ENCODE measurements at regions of chr6 and their contacts with region 1.

Region 1: GRCh38 chr6:118283766-118284165 is 264.3 kb upstream of the PLN start:
- DNase-seq: peak in 1 of 2 donors; percentile 80
- H3K4me3 ChIP-seq: peak overlapping the region in 1 of 2 donors; percentile 35
- H3K27ac ChIP-seq: no peak overlapping the region
- H3K4me1 ChIP-seq: peaks cover 11 to 36% of the 10 kb centered on the region in 2 donors
- H3K27me3 ChIP-seq: no peaks in the 10 kb centered on the region
- CTCF ChIP-seq: peak; percentile 42 to 81 (median 71)

Region 2: DNA sequence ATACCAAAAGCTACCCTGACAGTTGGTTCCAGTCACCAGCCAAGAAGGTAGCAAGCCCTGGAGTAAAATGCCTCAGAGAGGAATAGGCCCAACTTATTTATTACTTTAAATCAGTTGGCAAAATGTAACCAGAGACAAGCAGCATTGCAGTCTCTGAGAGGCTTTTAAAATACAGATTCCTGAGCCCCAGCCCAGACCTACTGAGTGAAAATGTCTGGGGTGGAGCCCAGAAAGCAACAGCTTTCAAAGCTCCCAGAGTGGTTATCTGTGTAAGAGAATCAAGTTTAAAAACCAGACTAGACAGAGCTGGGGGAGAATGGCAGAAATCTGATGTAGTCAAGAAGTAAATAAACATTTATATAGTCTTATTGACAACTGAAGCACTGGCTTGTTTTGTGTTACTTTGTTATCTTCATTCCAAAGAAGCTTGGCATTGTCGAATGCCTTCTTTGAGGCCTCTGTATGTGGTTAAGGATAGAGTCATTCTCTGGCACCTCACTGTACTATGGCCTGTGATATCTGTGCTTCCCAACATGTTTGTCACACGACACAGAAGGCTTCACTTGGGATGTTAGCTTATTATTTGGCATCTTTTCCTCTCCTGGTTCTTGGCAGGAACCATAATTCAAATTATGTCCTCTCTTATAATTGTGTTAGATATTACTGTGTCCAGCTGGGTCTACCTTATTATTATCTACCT is 63.2 kb before region 1 on chr6:
- intact Hi-C with region 1: no loop called
- DNase-seq: no peak
- H3K4me3 ChIP-seq: no peak overlapping the region
- H3K27ac ChIP-seq: no peak overlapping the region
- H3K4me1 ChIP-seq: no peaks in the 10 kb centered on the region
- H3K27me3 ChIP-seq: no peaks in the 10 kb centered on the region
- CTCF ChIP-seq: no peak

Region 3: GRCh38 chr6:118509009-118509617 is 225.3 kb after region 1 on chr6:
- intact Hi-C with region 1: loop called (anchors 1 kb)
- DNase-seq: peak in 1 of 2 donors; percentile 74
- H3K4me3 ChIP-seq: no peak overlapping the region
- H3K27ac ChIP-seq: no peak overlapping the region
- H3K4me1 ChIP-seq: peaks cover 0 to 12% of the 10 kb centered on the region in 2 donors
- H3K27me3 ChIP-seq: no peaks in the 10 kb centered on the region
- CTCF ChIP-seq: peak; percentile 57 to 78 (median 66)

Region 4: GRCh38 chr6:118551063-118552053 is 267.6 kb after region 1 on chr6:
- intact Hi-C with region 1: loop called (anchors 2 kb)
- DNase-seq: no peak
- H3K4me3 ChIP-seq: peak overlapping the region; percentile 53 to 69
- H3K27ac ChIP-seq: peak overlapping the region; percentile 83 to 89
- H3K4me1 ChIP-seq: no peaks in the 10 kb centered on the region
- H3K27me3 ChIP-seq: no peaks in the 10 kb centered on the region
- CTCF ChIP-seq: peak; percentile 57 to 69 (median 64)

Region 5: DNA sequence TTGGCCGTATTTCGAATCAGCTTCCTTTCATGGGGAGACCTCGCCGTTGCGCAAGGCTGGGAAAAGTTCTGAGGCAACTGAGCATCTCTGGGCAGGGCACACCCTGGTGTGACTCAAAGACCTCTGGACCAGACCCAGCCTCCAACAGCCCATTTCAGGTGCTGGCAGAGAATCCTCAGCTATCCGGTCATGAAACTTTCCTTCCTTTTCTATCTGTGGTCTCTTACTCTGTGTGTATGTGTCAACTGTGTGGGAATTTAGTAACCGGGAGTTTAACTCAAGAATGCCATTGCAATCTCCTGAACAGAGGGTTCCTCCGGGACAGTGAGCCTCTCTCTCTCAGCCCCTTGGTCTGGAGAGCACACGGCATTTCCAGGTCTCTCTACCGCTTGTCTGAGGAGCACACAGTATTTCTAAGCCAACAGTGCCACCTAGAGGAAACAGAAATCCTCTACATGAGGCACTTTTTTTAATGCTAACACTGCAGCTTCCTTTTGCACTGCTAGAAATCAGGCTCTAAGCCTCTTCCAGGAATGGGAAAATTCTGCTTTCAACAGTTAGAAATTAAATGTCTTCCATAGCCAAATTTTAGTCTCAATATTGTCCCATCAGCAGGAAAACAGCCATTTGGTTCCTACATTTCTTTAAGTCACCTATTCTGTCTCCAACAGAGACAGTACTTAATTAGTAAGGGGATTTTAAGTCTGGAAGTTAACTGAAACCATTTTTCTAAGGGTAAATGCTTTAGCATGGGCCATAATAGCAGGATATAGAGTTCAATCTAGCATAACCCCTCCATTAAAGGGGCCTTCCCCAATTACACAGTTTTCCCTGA is 297.0 kb after region 1 on chr6:
- intact Hi-C with region 1: loop called (anchors 1 kb)
- DNase-seq: peak in 1 of 2 donors; percentile 77
- H3K4me3 ChIP-seq: peak overlapping the region in 1 of 2 donors; percentile 8
- H3K27ac ChIP-seq: no peak overlapping the region
- H3K4me1 ChIP-seq: no peaks in the 10 kb centered on the region
- H3K27me3 ChIP-seq: no peaks in the 10 kb centered on the region
- CTCF ChIP-seq: peak; percentile 60 to 81 (median 61)

Region 6: GRCh38 chr6:118618679-118619377 is 335.1 kb after region 1 on chr6:
- intact Hi-C with region 1: loop called (anchors 1 kb)
- DNase-seq: peak in 1 of 2 donors; percentile 69
- H3K4me3 ChIP-seq: no peak overlapping the region
- H3K27ac ChIP-seq: no peak overlapping the region
- H3K4me1 ChIP-seq: peaks cover 3% of the 10 kb centered on the region in 2 donors
- H3K27me3 ChIP-seq: no peaks in the 10 kb centered on the region
- CTCF ChIP-seq: peak; percentile 75 to 83 (median 83)

Region 7: DNA sequence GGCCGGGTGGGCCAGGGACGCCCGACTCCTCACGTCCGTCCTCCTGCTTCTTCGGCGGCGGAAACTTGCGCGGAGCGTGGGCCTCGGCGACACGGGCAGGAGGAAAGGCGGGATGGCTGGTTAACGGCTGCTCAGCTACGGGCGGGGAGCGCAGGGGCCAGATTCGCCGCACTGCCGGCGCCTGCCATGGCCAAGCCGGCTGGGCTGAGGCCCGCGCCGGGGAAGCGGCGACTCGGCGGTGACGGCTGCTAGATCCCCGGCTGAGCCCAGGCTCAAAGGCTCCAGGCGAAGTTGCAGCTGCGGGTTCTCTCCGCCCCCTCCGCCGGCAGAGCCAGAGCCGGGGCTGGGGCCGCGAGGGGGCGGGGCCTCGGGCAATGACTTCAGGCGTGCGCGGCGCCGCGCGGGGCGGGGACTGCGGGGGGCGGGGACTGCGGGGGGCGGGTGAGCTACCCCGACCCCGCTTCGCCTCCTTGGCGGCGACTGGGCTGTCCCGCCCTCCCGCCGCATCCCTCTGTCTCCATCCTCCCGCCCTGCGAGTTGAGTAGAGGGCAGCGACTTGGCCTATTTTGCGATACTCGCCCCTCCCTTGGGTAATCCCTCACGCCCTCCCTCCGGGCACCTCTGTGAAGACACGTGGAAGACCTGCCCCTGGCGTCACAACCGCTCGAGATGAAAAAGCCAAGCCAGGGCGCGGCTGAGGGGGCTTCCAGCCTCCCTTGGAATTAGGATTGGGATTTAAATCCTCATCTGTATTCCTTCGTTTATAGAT is 367.7 kb after region 1 on chr6 and contains the start of gene CEP85L:
- intact Hi-C with region 1: loop called (anchors 10 kb)
- DNase-seq: peak; percentile 63 to 92
- H3K4me3 ChIP-seq: peak within 1 kb of the TSS; percentile 77 to 98
- H3K27ac ChIP-seq: peak within 1 kb of the TSS; percentile 91 to 99
- H3K4me1 ChIP-seq: peaks cover 0 to 11% of the 10 kb centered on the region in 2 donors
- H3K27me3 ChIP-seq: no peaks in the 10 kb centered on the region
- CTCF ChIP-seq: peak in 1 of 3 experiments; percentile 33
- total RNA-seq, gene CEP85L: 15.0 TPM

Region 8: GRCh38 chr6:118776607-118777549 is 493.1 kb after region 1 on chr6:
- intact Hi-C with region 1: loop called (anchors 2 kb)
- DNase-seq: peak; percentile 17 to 87
- H3K4me3 ChIP-seq: no peak overlapping the region
- H3K27ac ChIP-seq: no peak overlapping the region
- H3K4me1 ChIP-seq: peaks cover 0 to 4% of the 10 kb centered on the region in 2 donors
- H3K27me3 ChIP-seq: no peaks in the 10 kb centered on the region
- CTCF ChIP-seq: peak; percentile 29 to 73 (median 70)